SK-N-SH (cell line): ENCODE measurements at regions of chr17 and their contacts with region 1.

Region 1: DNA sequence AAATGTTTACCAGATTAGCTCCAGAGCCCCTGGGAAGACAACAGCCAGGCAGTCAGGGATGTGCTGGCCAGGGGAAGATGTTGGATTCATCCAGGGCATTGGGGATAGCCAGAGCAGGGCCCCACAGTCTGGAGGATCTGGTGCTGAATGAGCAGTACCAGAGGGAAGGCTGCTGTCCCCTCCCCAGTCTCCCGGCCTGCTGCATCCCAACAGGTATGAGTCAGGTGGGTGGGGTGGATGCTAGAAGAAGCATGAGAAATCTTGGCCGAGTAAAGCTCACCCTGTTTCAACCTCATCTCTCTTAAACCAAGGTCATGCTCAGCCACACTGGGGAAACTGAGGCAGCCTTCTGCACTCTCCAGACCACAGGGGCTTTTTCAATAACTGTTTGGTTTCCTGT is 71.9 kb upstream of the SEC14L1 start:
- DNase-seq: no peak
- H3K4me3 ChIP-seq: no peak overlapping the region
- H3K27ac ChIP-seq: no peak overlapping the region
- H3K4me1 ChIP-seq: no peaks in the 10 kb centered on the region; a peak in 1 of 4 replicates
- H3K27me3 ChIP-seq: peaks cover 22% of the 10 kb centered on the region; the same call in 1 of the 2 replicates
- CTCF ChIP-seq: no peak
- EP300 ChIP-seq: no peak
- RAD21 ChIP-seq: no peak

Region 2: DNA sequence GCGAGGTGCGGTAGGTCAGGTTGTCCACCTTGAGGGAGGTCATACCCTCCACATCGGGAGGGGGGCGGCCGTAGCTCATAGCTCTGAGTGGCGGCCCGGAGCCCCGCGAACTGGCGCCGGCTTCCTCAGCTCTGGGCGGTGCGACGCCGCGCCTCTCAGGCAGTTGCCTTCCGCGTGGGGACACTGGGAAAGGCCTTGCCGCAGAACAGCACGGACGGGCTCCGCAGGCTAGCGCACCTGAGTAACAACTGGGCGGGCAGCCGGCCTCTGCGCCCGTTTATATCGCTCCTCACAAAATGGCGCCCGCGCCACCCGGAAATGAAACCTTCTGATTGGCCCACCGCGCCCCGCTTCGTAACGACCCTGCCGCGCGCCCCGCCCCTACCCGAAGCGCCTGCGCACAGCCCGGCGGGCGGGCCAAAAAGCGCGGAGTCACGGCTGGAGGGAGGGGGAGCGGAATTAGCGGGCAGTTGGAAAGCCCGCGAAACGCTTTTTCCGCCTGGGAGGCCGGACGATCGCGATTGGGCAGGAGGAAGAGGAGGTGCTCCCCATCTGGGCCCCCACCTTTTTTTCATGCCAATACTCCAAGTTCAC is 331.7 kb before region 1 on chr17 and contains the start of gene SRSF2:
- CTCF ChIA-PET with region 1: interaction called, 12 read pairs
- POLR2A ChIA-PET with region 1: no interaction called
- DNase-seq: peak; percentile 100
- H3K4me3 ChIP-seq: peak within 1 kb of the TSS; percentile 93 to 100
- H3K27ac ChIP-seq: peak within 1 kb of the TSS; percentile 98 to 100
- H3K4me1 ChIP-seq: peaks cover 34 to 44% of the 10 kb centered on the region in 2 experiments
- H3K27me3 ChIP-seq: no peaks in the 10 kb centered on the region
- CTCF ChIP-seq: no peak
- EP300 ChIP-seq: peak in 1 of 2 experiments; percentile 26; a peak in 1 of 4 replicates
- RAD21 ChIP-seq: no peak
- polyA plus RNA-seq, gene SRSF2: 211 and 271 TPM in 2 replicates

Region 3: GRCh38 chr17:76826330-76827068 is 242.4 kb before region 1 on chr17:
- CTCF ChIA-PET with region 1: interaction called, 13 read pairs
- POLR2A ChIA-PET with region 1: no interaction called
- DNase-seq: peak; percentile 53
- H3K4me3 ChIP-seq: no peak overlapping the region
- H3K27ac ChIP-seq: no peak overlapping the region
- H3K4me1 ChIP-seq: peaks cover 0 to 4% of the 10 kb centered on the region in 2 experiments; a peak in 1 of 4 replicates
- H3K27me3 ChIP-seq: no peaks in the 10 kb centered on the region
- CTCF ChIP-seq: no peak
- EP300 ChIP-seq: no peak
- RAD21 ChIP-seq: no peak

Region 4: DNA sequence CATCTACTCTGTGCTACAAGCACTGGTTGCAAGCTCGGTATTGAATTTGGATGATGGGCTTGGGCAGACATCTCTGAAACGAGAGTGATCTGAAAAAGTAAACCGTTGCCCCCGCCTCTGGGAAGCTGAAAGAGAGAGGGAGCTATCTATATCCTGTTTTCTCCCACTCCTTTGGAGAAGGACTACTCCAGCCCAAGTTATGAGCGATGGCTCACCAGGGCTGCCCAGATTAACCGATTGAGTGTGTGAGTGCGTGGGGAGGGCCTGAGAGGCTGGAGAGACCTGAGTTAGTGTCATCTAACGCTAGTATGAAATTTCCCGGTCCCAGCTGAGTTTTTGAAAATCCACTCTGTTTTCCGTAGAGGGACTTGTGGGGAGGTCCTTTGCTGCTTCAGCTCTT is 189.2 kb before region 1 on chr17:
- CTCF ChIA-PET with region 1: interaction called, 24 read pairs
- POLR2A ChIA-PET with region 1: interaction called, 3 read pairs
- DNase-seq: no peak
- H3K4me3 ChIP-seq: no peak overlapping the region
- H3K27ac ChIP-seq: no peak overlapping the region
- H3K4me1 ChIP-seq: no peaks in the 10 kb centered on the region
- H3K27me3 ChIP-seq: no peaks in the 10 kb centered on the region
- CTCF ChIP-seq: no peak
- EP300 ChIP-seq: no peak
- RAD21 ChIP-seq: no peak

Region 5: GRCh38 chr17:77011173-77012011 is 57.5 kb before region 1 on chr17:
- CTCF ChIA-PET with region 1: interaction called, 28 read pairs
- POLR2A ChIA-PET with region 1: no interaction called
- DNase-seq: peak; percentile 58
- H3K4me3 ChIP-seq: peak overlapping the region in 1 of 2 experiments; percentile 1; a peak in 1 of 4 replicates
- H3K27ac ChIP-seq: no peak overlapping the region
- H3K4me1 ChIP-seq: no peaks in the 10 kb centered on the region
- H3K27me3 ChIP-seq: no peaks in the 10 kb centered on the region
- CTCF ChIP-seq: peak; percentile 72
- EP300 ChIP-seq: no peak
- RAD21 ChIP-seq: peak; percentile 83

Region 6: DNA sequence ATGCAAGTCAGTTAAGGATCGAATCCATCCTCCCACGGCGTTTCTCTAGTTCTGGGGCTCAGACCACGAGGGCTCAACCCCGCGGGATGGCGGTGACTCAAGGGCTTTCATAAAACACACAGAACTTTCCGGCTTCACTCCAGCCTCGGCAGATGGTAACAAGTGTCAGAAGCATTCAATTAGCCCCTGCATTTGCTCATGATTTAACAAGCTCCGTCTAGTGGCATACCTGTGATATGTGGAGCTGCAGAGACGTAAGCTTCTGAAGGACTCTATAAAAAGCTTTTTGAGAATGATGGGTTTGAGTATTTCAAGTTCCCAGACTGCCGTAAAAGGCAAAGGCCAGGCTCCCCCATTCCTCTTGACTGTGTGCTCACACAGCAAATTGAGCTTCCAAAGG is 19.5 kb before region 1 on chr17:
- CTCF ChIA-PET with region 1: interaction called, 270 read pairs
- POLR2A ChIA-PET with region 1: interaction called, 3 read pairs
- DNase-seq: no peak
- H3K4me3 ChIP-seq: no peak overlapping the region
- H3K27ac ChIP-seq: no peak overlapping the region
- H3K4me1 ChIP-seq: peaks cover 0 to 3% of the 10 kb centered on the region in 2 experiments; a peak in 1 of 4 replicates
- H3K27me3 ChIP-seq: peaks cover 51% of the 10 kb centered on the region
- CTCF ChIP-seq: no peak
- EP300 ChIP-seq: no peak
- RAD21 ChIP-seq: no peak

Region 7: DNA sequence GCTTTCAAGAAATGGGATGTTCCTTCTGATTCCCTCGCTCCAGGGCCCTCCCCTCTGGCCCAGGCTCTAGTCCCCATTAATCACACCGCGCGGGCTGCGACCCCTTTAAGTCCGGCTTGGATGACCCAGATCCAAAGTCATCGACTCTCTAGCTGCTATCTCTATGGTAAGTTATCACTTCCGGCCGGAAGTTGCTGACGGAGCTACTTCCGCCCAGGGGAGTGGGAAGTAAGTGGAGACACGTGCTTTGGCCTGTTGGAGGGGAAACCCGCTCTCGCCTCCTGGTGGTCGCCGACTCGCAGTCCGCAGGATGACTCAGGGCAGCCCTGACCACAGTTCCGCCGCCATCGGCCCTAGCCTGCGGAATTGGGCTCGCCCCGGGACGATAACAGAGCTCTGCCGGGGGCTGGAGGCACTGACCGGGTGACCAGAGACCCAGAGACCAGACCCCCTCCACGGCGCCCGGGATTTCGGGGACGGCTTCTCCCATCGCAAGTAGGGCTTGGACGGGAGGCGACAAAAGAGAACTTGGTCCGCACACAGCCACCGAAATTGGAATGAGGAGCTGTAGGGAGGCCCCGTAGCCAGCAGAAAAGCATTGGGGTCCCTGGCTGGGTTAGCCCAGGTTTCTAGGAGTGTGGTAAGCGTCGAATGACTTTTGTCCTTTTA is 19.7 kb after region 1 on chr17:
- CTCF ChIA-PET with region 1: interaction called, 33 read pairs
- POLR2A ChIA-PET with region 1: no interaction called
- DNase-seq: peak; percentile 93
- H3K4me3 ChIP-seq: peak overlapping the region; percentile 69 to 85
- H3K27ac ChIP-seq: peak overlapping the region; percentile 85 to 87
- H3K4me1 ChIP-seq: peaks cover 5 to 25% of the 10 kb centered on the region in 2 experiments; a peak in 1 of 4 replicates
- H3K27me3 ChIP-seq: no peaks in the 10 kb centered on the region
- CTCF ChIP-seq: peak; percentile 79
- EP300 ChIP-seq: peak in 1 of 2 experiments; percentile 16; a peak in 1 of 4 replicates
- RAD21 ChIP-seq: peak; percentile 48

Region 8: DNA sequence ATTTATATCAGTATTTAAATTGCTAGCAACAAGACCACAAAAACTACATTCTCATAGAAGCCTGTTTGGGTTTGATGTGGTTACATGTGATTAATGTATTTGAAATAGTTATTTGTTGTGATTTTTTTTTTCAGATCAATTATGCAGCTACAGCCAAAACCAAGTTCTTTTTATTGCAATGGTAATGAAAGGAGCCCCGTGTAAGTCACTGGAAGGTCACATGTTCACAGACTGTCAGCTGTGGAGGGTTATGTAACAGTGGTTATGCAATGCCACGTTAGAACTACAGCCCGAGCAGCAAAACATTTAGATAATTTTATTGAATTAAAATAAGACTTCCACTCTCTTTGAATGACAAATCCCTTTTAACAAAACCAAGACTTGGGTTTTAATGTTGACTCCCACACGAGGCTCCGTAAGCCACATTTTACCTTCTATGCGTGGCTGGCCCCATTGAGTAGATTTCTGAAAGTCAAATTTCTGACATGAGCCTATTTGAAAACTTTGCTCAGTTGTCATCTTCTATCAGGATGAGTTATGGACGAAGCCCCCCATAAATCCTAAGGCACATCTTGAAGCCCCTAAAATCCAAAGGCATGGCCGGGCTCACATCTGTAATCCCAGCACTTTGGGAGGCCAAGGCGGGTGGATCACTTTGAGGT is 30.1 kb after region 1 on chr17:
- CTCF ChIA-PET with region 1: no interaction called
- POLR2A ChIA-PET with region 1: no interaction called
- DNase-seq: no peak
- H3K4me3 ChIP-seq: no peak overlapping the region
- H3K27ac ChIP-seq: no peak overlapping the region
- H3K4me1 ChIP-seq: no peaks in the 10 kb centered on the region
- H3K27me3 ChIP-seq: no peaks in the 10 kb centered on the region
- CTCF ChIP-seq: no peak
- EP300 ChIP-seq: no peak
- RAD21 ChIP-seq: no peak